GM10248 (cell line): ENCODE measurements at regions of chr6 and their contacts with region 1.

Region 1: DNA sequence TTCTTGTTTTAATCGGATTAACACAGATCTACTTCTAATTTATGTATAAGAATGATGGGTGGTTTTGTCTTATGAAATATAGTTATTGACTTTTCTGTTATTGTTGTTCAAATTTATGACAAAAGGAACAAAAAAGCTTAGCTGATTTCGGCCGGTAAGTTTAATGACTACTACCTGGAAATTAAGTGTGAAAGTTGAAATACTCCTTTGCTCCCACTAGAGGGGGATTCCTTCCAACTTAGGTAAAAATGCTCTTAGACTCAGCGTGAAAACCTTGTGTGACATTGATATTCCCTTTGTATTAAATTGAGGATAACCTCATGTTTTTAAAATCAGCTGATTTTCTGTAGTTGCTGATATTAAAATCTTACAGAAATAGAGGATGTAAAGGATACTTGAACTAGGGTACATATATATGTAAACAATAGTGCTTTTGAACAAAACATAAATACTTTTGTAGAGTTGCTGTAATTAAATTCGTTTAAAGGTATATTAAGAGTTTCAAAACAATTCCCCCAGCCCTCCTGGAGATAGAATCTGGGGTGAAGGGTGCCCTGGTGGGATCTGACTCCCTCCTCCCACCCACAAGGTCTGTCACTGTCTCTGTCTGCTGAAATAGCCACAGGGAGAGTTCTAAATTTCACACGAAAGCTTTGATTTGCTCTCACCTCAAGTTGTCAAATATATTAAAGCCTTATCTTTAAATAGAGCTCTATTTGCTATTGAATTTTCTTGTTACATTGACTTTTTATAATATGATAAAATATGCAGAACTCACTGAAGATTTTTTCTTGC is 257.5 kb downstream of the ARID1B start:
- DNase-seq: peak; percentile 35
- CTCF ChIP-seq: peak; percentile 54

Region 2: DNA sequence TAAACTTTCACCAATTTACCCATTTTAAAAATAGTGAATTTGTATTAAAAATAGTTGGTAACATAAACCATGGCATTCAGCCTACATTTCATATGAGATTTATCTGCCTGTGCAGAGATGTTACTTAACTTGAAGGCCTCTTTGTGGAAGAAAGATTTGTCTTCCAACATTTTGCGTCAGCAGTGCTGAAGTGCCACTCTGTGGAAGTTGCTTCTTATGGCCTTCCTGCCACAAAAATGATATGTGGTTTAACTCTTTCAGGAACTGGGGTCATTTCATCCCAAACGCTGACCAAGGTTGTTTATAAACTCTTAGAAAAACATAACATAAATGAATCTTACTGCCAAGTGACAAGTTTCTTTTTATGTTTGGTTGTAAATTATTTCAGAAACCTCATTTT is 10.7 kb before region 1 on chr6:
- CTCF ChIA-PET with region 1: interaction called, 12 read pairs
- POLR2A ChIA-PET with region 1: no interaction called
- DNase-seq: no peak
- CTCF ChIP-seq: no peak

Region 3: DNA sequence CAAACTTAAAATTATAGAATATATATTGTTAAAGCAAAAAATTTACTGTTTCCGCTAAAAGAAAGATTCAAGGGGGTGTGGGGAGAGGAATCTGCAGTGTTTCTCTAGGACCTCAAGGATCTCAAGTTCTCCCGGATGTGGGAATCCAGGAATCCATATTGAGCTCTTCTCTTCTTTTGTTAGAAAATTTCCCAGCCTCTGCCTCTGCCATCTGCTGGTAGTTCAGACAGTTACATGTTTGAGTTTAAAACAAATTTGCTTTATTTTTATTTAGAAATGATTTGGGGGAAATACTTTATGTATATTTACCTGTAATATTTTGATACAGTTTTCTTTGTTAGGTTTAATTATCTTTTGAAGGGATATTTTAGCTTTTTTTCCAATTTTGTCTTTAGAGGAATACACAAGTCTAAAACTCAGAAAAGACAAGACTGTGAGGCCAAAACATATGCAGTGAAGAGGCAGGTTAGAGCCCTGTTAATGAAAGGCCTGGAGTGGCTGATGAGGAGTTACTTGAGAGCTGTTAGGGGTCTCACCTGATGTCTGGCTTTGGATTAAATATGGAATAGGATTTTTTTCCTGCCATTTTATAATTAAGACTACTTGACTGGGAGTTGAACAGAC is 11.3 kb after region 1 on chr6:
- CTCF ChIA-PET with region 1: interaction called, 49 read pairs
- POLR2A ChIA-PET with region 1: no interaction called
- DNase-seq: no peak
- CTCF ChIP-seq: peak; percentile 41

Region 4: DNA sequence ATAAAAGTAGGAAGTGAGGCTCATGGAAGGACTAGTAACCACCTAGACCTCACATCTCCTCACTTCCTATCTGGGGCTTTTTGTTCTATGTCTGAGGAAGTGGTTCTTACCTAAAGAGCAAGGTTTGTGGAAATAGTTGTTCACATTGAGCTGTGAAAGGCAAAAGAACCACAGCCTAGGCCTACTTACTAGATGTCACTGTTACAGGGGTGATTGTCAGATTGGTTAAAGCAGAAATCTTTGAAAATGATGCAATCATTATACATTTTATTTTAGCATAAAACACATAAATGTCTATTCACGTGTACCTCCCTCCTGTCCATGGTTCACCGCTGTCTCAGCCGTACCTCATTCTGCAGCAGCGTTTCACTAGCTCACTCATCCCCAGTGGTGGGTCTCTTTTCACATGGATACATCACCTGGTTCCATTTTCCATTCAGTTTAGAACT is 19.9 kb after region 1 on chr6:
- CTCF ChIA-PET with region 1: interaction called, 12 read pairs
- POLR2A ChIA-PET with region 1: no interaction called
- DNase-seq: peak; percentile 40
- CTCF ChIP-seq: no peak